ENCODE measurements at regions of chr1 and their contacts with region 1.

Region 1: GRCh38 chr1:229059671-229060539 is 211.0 kb upstream of the RAB4A start:
- DNase-seq: peak in 4 of 5 donors; percentile 42 to 59 (median 56)
- ATAC-seq: peak; percentile 76 to 90 (median 83)
- H3K4me3 ChIP-seq: no peak overlapping the region
- H3K27ac ChIP-seq: peak overlapping the region in 3 of 12 donors; percentile 25 to 43 (median 39)
- H3K4me1 ChIP-seq: peaks cover 0 to 49% (median 23%) of the 10 kb centered on the region in 12 donors
- H3K27me3 ChIP-seq: peaks cover 0 to under 1% (median 0%) of the 10 kb centered on the region in 9 donors
- CTCF ChIP-seq: no peak
- POLR2A ChIP-seq: no peak

Region 2: DNA sequence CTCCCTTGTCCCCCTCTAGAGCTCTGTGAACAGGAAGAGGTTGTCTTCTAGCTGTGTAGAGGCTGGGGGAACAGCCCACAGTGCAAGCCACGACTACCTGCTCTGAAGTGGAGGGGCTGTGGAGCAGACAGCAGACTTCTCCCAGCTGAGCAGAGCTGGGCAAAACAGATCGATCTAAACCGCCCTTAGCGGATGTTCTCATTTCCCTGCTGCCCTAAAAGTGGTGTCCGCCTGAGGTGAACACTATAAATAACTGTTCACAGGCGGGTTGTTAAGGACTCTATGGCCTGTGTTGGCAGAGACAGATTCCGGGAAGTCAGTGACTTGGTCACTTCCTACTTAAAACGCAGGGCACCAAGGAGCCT is 121.4 kb before region 1 on chr1:
- intact Hi-C with region 1: loop called in 1 of 10 experiments (anchors 5 kb)
- DNase-seq: peak in 4 of 5 donors; percentile 39 to 57 (median 48)
- ATAC-seq: peak; percentile 80 to 93 (median 88)
- H3K4me3 ChIP-seq: peak overlapping the region in 2 of 12 donors; percentile 19 to 30
- H3K27ac ChIP-seq: peak overlapping the region; percentile 39 to 89 (median 69)
- H3K4me1 ChIP-seq: peaks cover 0 to 68% (median 17%) of the 10 kb centered on the region in 12 donors
- H3K27me3 ChIP-seq: peaks cover 0 to under 1% (median 0%) of the 10 kb centered on the region in 9 donors
- CTCF ChIP-seq: no peak
- POLR2A ChIP-seq: peak in 1 of 2 donors; percentile 37

Region 3: GRCh38 chr1:229102741-229103391 is 43.0 kb after region 1 on chr1:
- intact Hi-C with region 1: no loop called
- DNase-seq: no peak
- ATAC-seq: no peak
- H3K4me3 ChIP-seq: no peak overlapping the region
- H3K27ac ChIP-seq: no peak overlapping the region
- H3K4me1 ChIP-seq: no peaks in the 10 kb centered on the region
- H3K27me3 ChIP-seq: peaks cover 0 to 4% (median 0%) of the 10 kb centered on the region in 9 donors
- CTCF ChIP-seq: no peak
- POLR2A ChIP-seq: no peak

Measured in heart left ventricle (tissue), 16 donors.